Prostate gland (tissue), 2 donors: ENCODE measurements at regions of chr18 and their contacts with region 1.

Region 1: GRCh38 chr18:55781481-55781957 is 193.5 kb upstream of the TCF4 start:
- DNase-seq: peak; percentile 12
- H3K4me3 ChIP-seq: no peak overlapping the region
- H3K27ac ChIP-seq: no peak overlapping the region
- H3K4me1 ChIP-seq: no peaks in the 10 kb centered on the region
- H3K27me3 ChIP-seq: no peaks in the 10 kb centered on the region
- CTCF ChIP-seq: peak in 3 of 4 experiments; percentile 36 to 56 (median 42)
- POLR2A ChIP-seq: no peak

Region 2: DNA sequence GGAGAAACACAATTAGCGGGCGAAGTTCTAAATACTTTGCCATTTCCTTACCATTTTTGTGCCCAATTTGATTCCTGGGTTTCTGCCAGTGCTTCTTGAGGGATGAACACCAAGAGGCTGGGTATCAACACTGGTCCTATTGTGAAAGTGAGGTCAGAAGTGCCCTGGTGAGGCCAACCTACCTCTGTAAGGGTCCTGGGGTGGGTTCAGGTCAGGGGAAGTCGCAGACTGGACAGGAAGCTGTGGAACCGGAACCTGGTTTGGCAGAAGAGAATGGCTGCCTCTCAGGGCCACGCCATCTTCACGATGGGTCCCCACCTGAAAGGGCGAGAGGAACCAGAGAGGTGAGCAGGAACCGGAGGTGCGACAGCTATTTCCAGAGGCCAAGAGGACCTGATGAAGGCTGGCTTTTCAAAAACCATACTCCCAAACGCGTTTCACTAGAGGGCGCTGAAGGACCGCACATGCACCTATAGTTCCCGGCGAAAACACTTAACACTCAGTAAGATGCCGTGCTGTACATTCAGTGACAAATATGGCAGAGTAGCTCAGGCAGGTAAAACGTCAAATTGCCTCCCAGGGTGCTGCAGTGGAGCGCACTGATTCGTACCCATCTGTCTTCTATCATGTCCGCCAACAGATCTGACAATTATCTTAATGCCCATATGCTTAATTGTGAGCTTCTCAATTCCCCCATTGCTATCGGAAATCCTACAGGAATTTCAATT is 547.0 kb before region 1 on chr18:
- intact Hi-C with region 1: loop called (anchors 5 kb)
- DNase-seq: peak; percentile 80
- H3K4me3 ChIP-seq: no peak overlapping the region
- H3K27ac ChIP-seq: no peak overlapping the region
- H3K4me1 ChIP-seq: no peaks in the 10 kb centered on the region
- H3K27me3 ChIP-seq: no peaks in the 10 kb centered on the region
- CTCF ChIP-seq: peak; percentile 23 to 77 (median 70)
- POLR2A ChIP-seq: no peak

Region 3: GRCh38 chr18:55337908-55338521 is 443.5 kb before region 1 on chr18:
- intact Hi-C with region 1: loop called (anchors 10 kb)
- DNase-seq: no peak
- H3K4me3 ChIP-seq: no peak overlapping the region
- H3K27ac ChIP-seq: no peak overlapping the region
- H3K4me1 ChIP-seq: no peaks in the 10 kb centered on the region
- H3K27me3 ChIP-seq: no peaks in the 10 kb centered on the region
- CTCF ChIP-seq: no peak
- POLR2A ChIP-seq: no peak

Region 4: DNA sequence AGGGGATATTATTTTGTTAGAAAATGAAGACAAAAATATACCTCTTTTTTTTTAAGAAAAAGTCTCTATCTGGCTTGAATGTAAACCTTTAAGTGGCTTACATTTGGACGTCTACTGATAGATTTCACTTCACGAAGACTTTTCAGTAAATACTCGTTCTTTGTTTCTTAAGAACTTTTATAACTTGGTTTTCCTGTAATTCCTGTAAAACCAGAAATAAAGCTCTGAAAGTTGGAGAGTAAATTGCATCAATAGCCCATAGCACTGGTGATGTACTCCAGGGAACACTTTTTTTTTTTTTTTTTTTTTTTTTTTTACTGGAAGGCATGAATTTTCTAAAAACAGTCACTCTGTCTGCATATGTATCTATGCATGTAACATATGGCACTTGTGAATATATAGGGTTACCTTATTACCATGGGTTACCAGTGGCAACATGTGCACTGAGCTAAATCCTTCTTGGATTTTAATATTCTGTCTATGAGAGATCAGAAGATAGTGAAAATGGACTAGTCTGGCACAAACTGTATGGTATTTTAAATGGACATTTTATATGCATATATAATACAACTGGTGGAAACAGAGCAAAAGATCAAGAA is 115.7 kb after region 1 on chr18:
- intact Hi-C with region 1: no loop called
- DNase-seq: no peak
- H3K4me3 ChIP-seq: no peak overlapping the region
- H3K27ac ChIP-seq: no peak overlapping the region
- H3K4me1 ChIP-seq: no peaks in the 10 kb centered on the region
- H3K27me3 ChIP-seq: no peaks in the 10 kb centered on the region
- CTCF ChIP-seq: no peak
- POLR2A ChIP-seq: no peak